Naive thymus-derived CD4-positive, alpha-beta T cell (primary cell): ENCODE measurements at regions of chrX and their contacts with region 1.

Region 1: DNA sequence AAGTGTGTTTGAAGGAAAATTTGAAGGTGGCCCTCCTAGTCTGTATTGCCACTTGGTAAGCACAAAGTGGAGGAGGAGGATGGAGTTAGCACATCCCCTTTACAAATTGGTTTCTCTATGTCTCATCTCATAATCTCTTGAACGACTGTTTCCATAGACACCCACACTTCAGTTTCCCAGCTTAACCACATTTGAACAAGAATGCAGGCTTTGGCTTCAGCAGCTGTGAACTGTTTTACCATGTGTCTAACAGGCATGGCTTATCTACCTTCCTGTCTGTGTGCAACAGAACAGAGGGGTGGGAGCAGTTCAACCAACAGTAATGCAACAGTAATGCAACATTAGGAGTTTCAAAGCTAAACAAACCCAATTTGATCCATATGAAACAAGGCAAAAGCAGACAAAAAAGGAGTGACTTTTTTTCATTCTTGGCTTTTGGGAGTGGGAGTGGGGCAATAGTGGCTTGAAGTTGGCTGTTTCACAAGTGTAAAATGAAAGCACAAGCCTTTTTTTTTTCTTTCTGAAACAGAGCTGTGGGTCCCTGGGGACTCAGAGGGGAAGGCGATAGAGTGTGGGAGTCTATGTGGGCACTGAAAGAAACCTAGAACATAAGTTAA is 108.0 kb downstream of the ITM2A start:
- DNase-seq: peak; percentile 4 to 84 (median 74)
- ATAC-seq: peak; percentile 95
- H3K4me3 ChIP-seq: peak overlapping the region; percentile 23
- H3K4me3 Mint-ChIP-seq: peak overlapping the region; percentile 10 to 86 (median 79)
- H3K27ac ChIP-seq: peak overlapping the region; percentile 78
- H3K27ac Mint-ChIP-seq: peak overlapping the region; percentile 83 to 98 (median 94)
- H3K4me1 ChIP-seq: peaks cover 52 to 65% of the 10 kb centered on the region in 2 donors
- H3K4me1 Mint-ChIP-seq: peaks cover 26 to 90% (median 82%) of the 10 kb centered on the region in 7 donors
- H3K27me3 ChIP-seq: no peaks in the 10 kb centered on the region
- H3K27me3 Mint-ChIP-seq: no peaks in the 10 kb centered on the region

Region 2: GRCh38 chrX:78333521-78333920 is 925.7 kb before region 1 on chrX:
- CTCF ChIA-PET with region 1: no interaction called
- POLR2A ChIA-PET with region 1: no interaction called
- intact Hi-C with region 1: loop called in 1 of 2 experiments (anchors 5 kb)
- DNase-seq: peak in 7 of 9 donors; percentile 33 to 77 (median 55)
- ATAC-seq: peak; percentile 88
- H3K4me3 ChIP-seq: no peak overlapping the region
- H3K4me3 Mint-ChIP-seq: peak overlapping the region in 9 of 10 donors; percentile 3 to 70 (median 19)
- H3K27ac ChIP-seq: peak overlapping the region; percentile 75
- H3K27ac Mint-ChIP-seq: peak overlapping the region; percentile 60 to 99 (median 89)
- H3K4me1 ChIP-seq: peaks cover 9 to 38% of the 10 kb centered on the region in 2 donors
- H3K4me1 Mint-ChIP-seq: peaks cover 22 to 86% (median 67%) of the 10 kb centered on the region in 7 donors
- H3K27me3 ChIP-seq: no peaks in the 10 kb centered on the region
- H3K27me3 Mint-ChIP-seq: no peaks in the 10 kb centered on the region

Region 3: GRCh38 chrX:79096145-79096556 is 163.0 kb before region 1 on chrX:
- CTCF ChIA-PET with region 1: no interaction called
- POLR2A ChIA-PET with region 1: interaction called, 4 read pairs
- intact Hi-C with region 1: loop called in 1 of 2 experiments (anchors 2 kb)
- DNase-seq: peak in 5 of 9 donors; percentile 3 to 32 (median 21)
- ATAC-seq: peak; percentile 83
- H3K4me3 ChIP-seq: peak overlapping the region; percentile 4
- H3K4me3 Mint-ChIP-seq: peak overlapping the region; percentile 20 to 81 (median 52)
- H3K27ac ChIP-seq: peak overlapping the region; percentile 71
- H3K27ac Mint-ChIP-seq: peak overlapping the region; percentile 68 to 99 (median 91)
- H3K4me1 ChIP-seq: peaks cover 21 to 22% of the 10 kb centered on the region in 2 donors
- H3K4me1 Mint-ChIP-seq: peaks cover 13 to 76% (median 56%) of the 10 kb centered on the region in 7 donors
- H3K27me3 ChIP-seq: no peaks in the 10 kb centered on the region
- H3K27me3 Mint-ChIP-seq: no peaks in the 10 kb centered on the region

Region 4: DNA sequence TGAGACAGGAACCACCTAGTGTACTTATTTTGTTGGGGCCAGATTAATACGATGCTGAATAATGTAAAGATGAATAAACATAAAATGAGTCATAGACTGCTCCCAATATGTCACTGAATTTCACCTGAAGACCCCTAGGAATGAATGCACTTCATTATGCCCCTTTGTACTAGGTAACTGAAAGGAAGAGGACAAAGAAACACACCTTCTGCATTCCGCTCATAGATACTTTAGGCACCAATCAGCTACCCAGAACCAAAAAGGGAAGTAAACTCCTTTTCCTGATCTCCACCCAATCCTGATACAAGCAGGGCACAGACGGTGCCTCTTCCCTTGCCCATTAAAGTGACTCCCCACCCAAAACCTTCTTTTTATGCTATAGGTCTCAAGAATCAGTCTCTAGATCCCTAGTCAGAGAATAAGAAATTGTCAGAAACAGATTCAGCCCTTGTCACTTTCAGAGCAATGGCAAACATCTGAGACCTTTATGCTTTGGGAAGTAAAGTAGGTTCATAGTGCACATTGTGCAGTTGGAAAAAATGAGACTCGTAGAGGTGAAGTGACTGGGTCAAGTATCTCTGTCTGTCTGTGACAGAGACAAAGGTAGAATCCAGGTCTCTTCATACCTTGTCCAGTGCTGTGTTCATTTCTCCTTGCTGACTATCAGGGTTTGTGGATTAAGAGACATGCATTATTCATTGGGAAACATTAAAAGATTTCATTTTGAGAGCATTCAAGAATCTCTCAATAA is 112.4 kb before region 1 on chrX:
- CTCF ChIA-PET with region 1: no interaction called
- POLR2A ChIA-PET with region 1: interaction called, 5 read pairs
- intact Hi-C with region 1: loop called in 1 of 2 experiments (anchors 1 kb)
- DNase-seq: no peak
- ATAC-seq: peak; percentile 64
- H3K4me3 ChIP-seq: peak overlapping the region; percentile 71
- H3K4me3 Mint-ChIP-seq: peak overlapping the region; percentile 66 to 96 (median 92)
- H3K27ac ChIP-seq: peak overlapping the region; percentile 85
- H3K27ac Mint-ChIP-seq: peak overlapping the region; percentile 82 to 98 (median 91)
- H3K4me1 ChIP-seq: peaks cover 10 to 16% of the 10 kb centered on the region in 2 donors
- H3K4me1 Mint-ChIP-seq: peaks cover 10 to 47% (median 28%) of the 10 kb centered on the region in 7 donors
- H3K27me3 ChIP-seq: no peaks in the 10 kb centered on the region
- H3K27me3 Mint-ChIP-seq: no peaks in the 10 kb centered on the region

Region 5: GRCh38 chrX:79161655-79162054 is 97.5 kb before region 1 on chrX:
- CTCF ChIA-PET with region 1: no interaction called
- POLR2A ChIA-PET with region 1: interaction called, 4 read pairs
- intact Hi-C with region 1: loop called (anchors 2 kb)
- DNase-seq: peak in 8 of 9 donors; percentile 22 to 85 (median 77)
- ATAC-seq: peak; percentile 95
- H3K4me3 ChIP-seq: peak overlapping the region; percentile 52
- H3K4me3 Mint-ChIP-seq: peak overlapping the region; percentile 80 to 96 (median 90)
- H3K27ac ChIP-seq: peak overlapping the region; percentile 76
- H3K27ac Mint-ChIP-seq: peak overlapping the region; percentile 95 to 99 (median 97)
- H3K4me1 ChIP-seq: peaks cover 48 to 50% of the 10 kb centered on the region in 2 donors
- H3K4me1 Mint-ChIP-seq: peaks cover 16 to 79% (median 68%) of the 10 kb centered on the region in 7 donors
- H3K27me3 ChIP-seq: no peaks in the 10 kb centered on the region
- H3K27me3 Mint-ChIP-seq: no peaks in the 10 kb centered on the region

Region 6: GRCh38 chrX:79270401-79270800 is 11.2 kb after region 1 on chrX:
- CTCF ChIA-PET with region 1: interaction called, 4 read pairs
- POLR2A ChIA-PET with region 1: interaction called, 8 read pairs
- intact Hi-C with region 1: loop called in 1 of 2 experiments (anchors 1 kb)
- DNase-seq: peak; percentile 29 to 76 (median 68)
- ATAC-seq: peak; percentile 98
- H3K4me3 ChIP-seq: no peak overlapping the region
- H3K4me3 Mint-ChIP-seq: peak overlapping the region; percentile 17 to 77 (median 56)
- H3K27ac ChIP-seq: peak overlapping the region; percentile 61
- H3K27ac Mint-ChIP-seq: peak overlapping the region in 8 of 9 donors; percentile 84 to 94 (median 90)
- H3K4me1 ChIP-seq: peaks cover 24 to 34% of the 10 kb centered on the region in 2 donors
- H3K4me1 Mint-ChIP-seq: peaks cover 13 to 68% (median 45%) of the 10 kb centered on the region in 7 donors
- H3K27me3 ChIP-seq: no peaks in the 10 kb centered on the region
- H3K27me3 Mint-ChIP-seq: no peaks in the 10 kb centered on the region

Region 7: DNA sequence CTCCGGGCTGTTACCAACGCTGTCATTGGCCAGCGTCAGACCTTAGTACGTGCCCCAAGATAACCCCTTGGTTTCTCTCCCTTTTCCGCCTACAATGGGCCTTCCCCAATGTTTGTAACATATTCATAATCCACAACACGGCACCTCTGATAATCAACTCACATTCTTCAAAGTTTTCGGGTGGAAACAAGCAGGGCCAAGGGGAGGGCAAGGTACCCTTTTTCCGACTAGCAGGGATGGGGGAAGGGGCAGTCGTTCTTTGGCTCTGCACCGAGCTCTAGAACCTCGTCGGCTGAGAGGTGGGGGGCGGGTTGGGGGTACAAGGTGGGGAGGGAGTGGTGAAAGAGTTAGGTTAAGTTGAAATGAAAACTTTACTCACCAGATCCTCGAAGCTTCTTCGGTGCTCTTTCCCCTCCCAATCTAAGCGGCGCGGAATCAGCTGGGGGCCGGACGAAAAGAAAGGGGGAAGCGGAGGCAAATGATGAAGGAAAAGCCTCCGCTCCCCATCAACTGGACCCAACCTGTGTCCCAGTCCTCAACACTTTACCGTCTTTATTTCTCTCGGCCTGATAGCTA is 1549.1 kb after region 1 on chrX:
- CTCF ChIA-PET with region 1: no interaction called
- POLR2A ChIA-PET with region 1: no interaction called
- intact Hi-C with region 1: loop called in 1 of 2 experiments (anchors 10 kb)
- DNase-seq: peak; percentile 54 to 82 (median 75)
- ATAC-seq: peak; percentile 72
- H3K4me3 ChIP-seq: peak overlapping the region; percentile 90
- H3K4me3 Mint-ChIP-seq: peak overlapping the region; percentile 81 to 96 (median 94)
- H3K27ac ChIP-seq: peak overlapping the region; percentile 88
- H3K27ac Mint-ChIP-seq: peak overlapping the region; percentile 72 to 99 (median 96)
- H3K4me1 ChIP-seq: peaks cover 8 to 21% of the 10 kb centered on the region in 2 donors
- H3K4me1 Mint-ChIP-seq: peaks cover 5 to 53% (median 32%) of the 10 kb centered on the region in 7 donors
- H3K27me3 ChIP-seq: no peaks in the 10 kb centered on the region
- H3K27me3 Mint-ChIP-seq: peaks cover 0 to 4% (median 0%) of the 10 kb centered on the region in 5 donors